ENCODE measurements at regions of chr3 and their contacts with region 1.

Region 1: DNA sequence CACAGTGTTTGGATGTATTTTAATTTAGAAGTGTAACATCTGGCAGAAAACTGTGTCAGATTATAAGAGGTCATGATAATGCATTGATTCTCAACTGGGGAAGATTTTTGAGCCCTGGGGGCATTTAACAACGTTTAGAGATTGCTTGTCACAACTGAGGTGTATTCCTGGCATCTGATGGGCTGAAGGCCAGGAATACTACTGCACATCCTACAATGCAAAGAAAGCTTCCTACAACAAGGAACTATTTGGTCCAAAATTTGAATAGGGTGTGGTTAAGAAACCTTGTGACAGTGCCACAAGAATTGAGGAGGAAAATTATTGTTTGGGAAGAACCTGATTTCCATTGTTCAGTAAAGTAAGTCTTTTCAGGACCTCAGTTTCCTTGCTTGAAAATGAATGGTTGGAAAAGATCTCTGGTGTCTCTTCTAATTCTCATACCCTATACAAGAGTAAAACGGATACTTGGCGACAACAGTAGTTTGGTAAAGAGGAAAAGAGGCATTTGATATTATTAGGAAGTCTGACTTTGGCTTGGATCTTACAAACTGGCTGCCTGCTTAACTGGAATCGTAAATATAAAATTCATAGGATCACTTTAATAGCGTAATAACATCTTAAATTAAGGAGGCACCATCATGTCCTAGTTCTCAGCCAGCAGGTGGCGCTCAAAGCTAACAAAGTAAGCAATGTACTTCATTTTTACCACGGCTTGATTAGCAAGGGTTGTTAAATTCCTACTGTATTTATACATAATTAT is 4.3 kb downstream of the DAZL start:
- DNase-seq: peak; percentile 56 to 90 (median 78)
- H3K4me3 ChIP-seq: peak overlapping the region in 37 of 59 donors; percentile 1 to 50 (median 27)
- H3K27ac ChIP-seq: no peak overlapping the region
- H3K27me3 ChIP-seq: no peaks in the 10 kb centered on the region
- CTCF ChIP-seq: peak; percentile 85 to 99 (median 94)

Region 2: GRCh38 chr3:16622932-16623331 is 22.0 kb after region 1 on chr3:
- intact Hi-C with region 1: no loop called
- DNase-seq: no peak
- H3K4me3 ChIP-seq: no peak overlapping the region
- H3K27ac ChIP-seq: no peak overlapping the region
- H3K27me3 ChIP-seq: no peaks in the 10 kb centered on the region
- CTCF ChIP-seq: no peak

Region 3: DNA sequence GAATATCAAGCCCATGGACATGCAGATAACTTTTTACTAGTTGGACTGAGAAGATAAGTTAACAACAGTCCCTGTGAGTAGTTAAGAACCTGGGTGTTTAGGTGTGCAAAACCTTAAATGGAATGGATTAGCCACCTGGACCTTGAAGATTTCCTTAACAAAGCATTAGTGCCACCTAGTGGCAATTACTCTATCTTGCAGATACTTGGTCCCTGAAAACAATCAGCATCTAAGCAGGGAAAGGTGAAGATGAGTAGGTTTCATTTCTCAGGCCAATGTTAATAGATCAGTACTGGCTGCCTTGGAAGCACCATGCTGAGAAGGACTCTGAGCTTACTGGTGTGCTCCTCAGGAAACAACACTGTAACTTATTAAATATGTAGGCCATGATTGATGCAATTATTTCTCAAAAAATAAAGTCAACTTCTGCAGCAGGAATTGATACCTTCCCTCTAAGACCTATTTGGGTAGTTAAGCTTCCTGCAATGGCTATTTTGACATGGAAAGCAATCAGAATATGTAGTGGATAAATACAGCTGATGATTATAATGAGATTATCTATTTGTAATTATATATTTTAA is 812.1 kb after region 1 on chr3:
- intact Hi-C with region 1: loop called in 1 of 2 experiments (anchors 10 kb)
- DNase-seq: no peak
- H3K4me3 ChIP-seq: no peak overlapping the region
- H3K27ac ChIP-seq: no peak overlapping the region
- H3K27me3 ChIP-seq: no peaks in the 10 kb centered on the region
- CTCF ChIP-seq: peak; percentile 53 to 90 (median 73)